ENCODE measurements at regions of chr2 and their contacts with region 1.

Region 1: GRCh38 chr2:741195-741496 is 63.9 kb upstream of the TMEM18 start:
- DNase-seq: no peak
- H3K4me3 ChIP-seq: peak overlapping the region; percentile 41
- H3K27ac ChIP-seq: no peak overlapping the region
- H3K4me1 ChIP-seq: peaks cover 6% of the 10 kb centered on the region
- H3K27me3 ChIP-seq: no peaks in the 10 kb centered on the region
- CTCF ChIP-seq: no peak

Region 2: DNA sequence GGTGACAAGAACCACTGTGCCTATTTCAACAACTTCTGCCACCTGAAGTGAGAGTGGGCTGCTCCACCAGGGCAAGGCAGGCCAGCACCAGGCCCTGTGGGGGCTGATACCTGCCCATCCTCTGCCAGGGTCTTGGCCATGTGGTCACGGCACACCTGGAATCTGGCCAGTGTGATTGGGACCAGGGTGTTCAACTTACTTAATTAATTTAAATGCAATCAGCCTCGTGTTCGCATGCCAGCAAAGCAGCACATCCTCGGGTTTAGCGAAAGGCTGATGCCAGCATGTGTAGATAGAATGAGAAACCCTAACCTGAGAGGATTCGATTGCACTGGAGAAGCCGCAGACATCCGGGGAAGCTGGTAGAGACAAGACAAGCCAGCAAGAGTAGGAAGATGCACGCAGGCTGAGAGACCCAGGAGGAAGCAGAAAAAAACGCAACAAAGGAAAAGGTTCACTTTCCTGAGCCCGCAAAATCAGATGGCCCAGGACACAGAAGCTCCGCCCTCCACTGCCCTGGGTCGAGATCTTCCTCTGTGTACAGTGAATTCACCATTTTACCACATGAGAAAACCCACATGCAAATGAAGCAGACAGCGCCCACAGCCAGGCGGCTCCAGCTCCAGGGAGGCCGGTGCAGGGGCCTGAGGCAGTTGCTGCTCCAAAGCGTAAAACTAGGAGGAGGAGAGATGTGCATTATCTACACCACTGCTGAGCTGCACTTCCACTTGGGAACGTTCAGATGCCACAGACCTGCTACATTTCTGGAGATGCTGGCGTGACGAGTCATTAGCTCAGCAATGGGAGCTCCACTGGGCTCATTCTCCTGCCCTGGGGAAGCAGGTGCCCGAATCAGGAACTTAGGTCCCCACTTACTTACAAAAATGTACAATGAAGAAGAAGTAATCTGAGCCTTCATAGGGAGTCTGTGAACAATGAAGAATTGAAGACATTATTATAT is 156.0 kb before region 1 on chr2:
- CTCF ChIA-PET with region 1: no interaction called
- POLR2A ChIA-PET with region 1: no interaction called
- intact Hi-C with region 1: no loop called
- DNase-seq: no peak
- H3K4me3 ChIP-seq: no peak overlapping the region
- H3K27ac ChIP-seq: no peak overlapping the region
- H3K4me1 ChIP-seq: no peaks in the 10 kb centered on the region
- H3K27me3 ChIP-seq: no peaks in the 10 kb centered on the region
- CTCF ChIP-seq: no peak

Region 3: DNA sequence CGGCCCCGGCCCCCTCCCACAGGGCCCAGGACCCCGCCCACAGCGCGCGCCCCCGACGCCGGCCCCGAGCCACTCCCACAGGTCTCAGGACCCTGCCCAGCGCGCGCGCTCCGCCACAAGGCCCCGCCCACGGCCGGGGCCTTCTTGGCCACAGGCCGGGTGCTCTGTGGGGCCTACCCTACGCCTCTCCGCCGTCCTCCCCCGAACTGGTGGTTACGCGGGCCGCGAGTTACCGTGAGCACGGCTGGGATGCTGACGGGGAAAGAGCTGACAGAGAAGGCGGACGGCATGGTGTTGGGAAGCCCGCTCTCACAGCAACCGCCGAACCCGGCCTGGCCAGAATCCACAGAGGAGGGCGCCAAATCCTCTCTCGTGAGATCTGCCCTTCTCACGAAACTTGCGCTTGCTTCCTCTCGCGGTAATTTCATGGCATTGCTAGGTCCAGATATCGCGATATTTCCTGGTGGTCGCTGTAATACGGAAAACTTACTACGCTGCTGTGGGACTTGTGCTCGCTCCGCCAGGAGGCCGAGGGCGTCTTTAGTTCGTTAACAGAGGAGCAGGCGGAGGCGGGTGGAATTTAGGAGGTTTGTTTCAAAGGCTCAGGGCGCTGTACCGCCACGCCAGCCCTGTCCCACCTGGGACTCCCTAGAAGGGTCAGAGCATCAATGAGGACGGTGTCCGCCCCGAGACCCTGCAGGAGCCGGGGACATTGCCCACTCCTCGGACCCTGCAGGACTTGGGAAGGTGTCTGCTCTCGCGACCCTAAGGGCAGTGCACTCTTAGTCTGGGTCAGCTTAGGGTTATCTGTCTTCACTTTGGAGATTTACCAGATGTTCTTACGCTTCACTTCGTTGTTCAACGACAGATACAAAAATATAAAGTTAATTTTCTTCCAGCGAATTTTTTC is 63.8 kb before region 1 on chr2 and contains the start of gene TMEM18:
- CTCF ChIA-PET with region 1: interaction called, 14 read pairs
- POLR2A ChIA-PET with region 1: no interaction called
- intact Hi-C with region 1: loop called (anchors 5 kb)
- DNase-seq: peak; percentile 98
- H3K4me3 ChIP-seq: peak within 1 kb of the TSS; percentile 77
- H3K27ac ChIP-seq: peak within 1 kb of the TSS; percentile 100
- H3K4me1 ChIP-seq: peaks cover 8% of the 10 kb centered on the region
- H3K27me3 ChIP-seq: no peaks in the 10 kb centered on the region
- CTCF ChIP-seq: peak; percentile 33; the same call in 1 of the 2 replicates
- total RNA-seq, gene TMEM18: 25.9 and 29.0 TPM in 2 replicates

Region 4: GRCh38 chr2:1268034-1268433 is 526.9 kb after region 1 on chr2:
- CTCF ChIA-PET with region 1: no interaction called
- POLR2A ChIA-PET with region 1: no interaction called
- intact Hi-C with region 1: no loop called
- DNase-seq: no peak
- H3K4me3 ChIP-seq: no peak overlapping the region
- H3K27ac ChIP-seq: no peak overlapping the region
- H3K4me1 ChIP-seq: no peaks in the 10 kb centered on the region
- H3K27me3 ChIP-seq: no peaks in the 10 kb centered on the region
- CTCF ChIP-seq: no peak